MCF 10A (cell line): ENCODE measurements at regions of chr3 and their contacts with region 1.

Region 1: GRCh38 chr3:168865022-168865551 is 769.4 kb upstream of the GOLIM4 start:
- DNase-seq: peak; percentile 41
- H3K4me3 Mint-ChIP-seq: no peak overlapping the region
- H3K27ac Mint-ChIP-seq: no peak overlapping the region
- H3K4me1 Mint-ChIP-seq: no peaks in the 10 kb centered on the region
- H3K27me3 Mint-ChIP-seq: peaks cover 59% of the 10 kb centered on the region
- CTCF ChIP-seq: peak; percentile 65

Region 2: GRCh38 chr3:168878655-168879054 is 13.6 kb after region 1 on chr3:
- CTCF ChIA-PET with region 1: interaction called, 25 read pairs
- POLR2A ChIA-PET with region 1: interaction called, 3 read pairs
- intact Hi-C with region 1: no loop called
- DNase-seq: no peak
- H3K4me3 Mint-ChIP-seq: no peak overlapping the region
- H3K27ac Mint-ChIP-seq: no peak overlapping the region
- H3K4me1 Mint-ChIP-seq: no peaks in the 10 kb centered on the region
- H3K27me3 Mint-ChIP-seq: no peaks in the 10 kb centered on the region
- CTCF ChIP-seq: no peak

Region 3: GRCh38 chr3:168884353-168884903 is 19.3 kb after region 1 on chr3:
- CTCF ChIA-PET with region 1: interaction called, 25 read pairs
- POLR2A ChIA-PET with region 1: no interaction called
- intact Hi-C with region 1: no loop called
- DNase-seq: peak; percentile 83
- H3K4me3 Mint-ChIP-seq: no peak overlapping the region
- H3K27ac Mint-ChIP-seq: peak overlapping the region; percentile 15
- H3K4me1 Mint-ChIP-seq: peaks cover 6% of the 10 kb centered on the region
- H3K27me3 Mint-ChIP-seq: no peaks in the 10 kb centered on the region
- CTCF ChIP-seq: no peak

Region 4: DNA sequence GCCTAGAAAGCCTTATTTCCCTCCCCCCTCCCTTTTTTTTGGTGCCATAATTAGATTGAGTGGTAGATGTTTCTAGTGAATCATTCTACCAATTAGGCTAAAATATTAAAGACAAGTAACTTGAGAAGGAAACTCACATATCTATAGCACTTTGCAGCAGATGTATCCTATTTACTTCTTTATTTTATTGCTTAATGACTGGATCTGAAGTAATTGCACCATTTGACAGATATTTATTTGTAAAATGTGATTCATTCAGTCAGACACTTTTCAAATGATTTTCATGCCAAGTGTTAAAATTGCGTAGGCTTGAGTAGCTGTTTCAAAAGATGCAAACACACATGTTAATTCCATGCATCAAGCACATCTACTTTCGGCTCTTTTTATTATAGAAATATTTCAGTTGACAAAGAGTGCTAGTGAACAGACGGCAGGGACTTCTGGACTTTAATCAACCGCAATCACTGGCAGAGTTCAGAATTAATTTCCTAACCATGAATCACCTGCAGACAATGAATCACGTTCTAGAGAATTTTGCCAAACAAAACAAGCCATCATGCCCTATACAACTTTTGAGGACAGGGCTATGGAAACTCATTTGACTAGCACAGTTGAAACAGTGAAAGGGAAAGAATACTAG is 161.6 kb after region 1 on chr3:
- CTCF ChIA-PET with region 1: no interaction called
- POLR2A ChIA-PET with region 1: no interaction called
- intact Hi-C with region 1: loop called (anchors 10 kb)
- DNase-seq: peak; percentile 96
- H3K4me3 Mint-ChIP-seq: peak overlapping the region; percentile 68
- H3K27ac Mint-ChIP-seq: peak overlapping the region; percentile 71
- H3K4me1 Mint-ChIP-seq: peaks cover 11% of the 10 kb centered on the region
- H3K27me3 Mint-ChIP-seq: no peaks in the 10 kb centered on the region
- CTCF ChIP-seq: no peak

Region 5: GRCh38 chr3:169744366-169745054 is 879.4 kb after region 1 on chr3:
- CTCF ChIA-PET with region 1: interaction called, 5 read pairs
- POLR2A ChIA-PET with region 1: no interaction called
- intact Hi-C with region 1: loop called (anchors 5 kb)
- DNase-seq: no peak
- H3K4me3 Mint-ChIP-seq: no peak overlapping the region
- H3K27ac Mint-ChIP-seq: no peak overlapping the region
- H3K4me1 Mint-ChIP-seq: peaks cover 9% of the 10 kb centered on the region
- H3K27me3 Mint-ChIP-seq: no peaks in the 10 kb centered on the region
- CTCF ChIP-seq: peak; percentile 24